ENCODE measurements at regions of chr9 and their contacts with region 1.

Region 1: GRCh38 chr9:20622330-20623020 is at the start of gene MLLT3:
- DNase-seq: peak; percentile 95 to 97 (median 96)
- H3K4me3 ChIP-seq: peak within 1 kb of the TSS; percentile 52 to 91 (median 80)
- H3K27ac ChIP-seq: peak within 1 kb of the TSS; percentile 49 to 91 (median 89)
- H3K4me1 ChIP-seq: peaks cover 14 to 30% of the 10 kb centered on the region in 2 donors
- H3K27me3 ChIP-seq: no peaks in the 10 kb centered on the region
- CTCF ChIP-seq: no peak
- POLR2A ChIP-seq: peak; percentile 51 to 91
- total RNA-seq, gene MLLT3: 14.0 to 37.7 (median 24.7) TPM

Region 2: DNA sequence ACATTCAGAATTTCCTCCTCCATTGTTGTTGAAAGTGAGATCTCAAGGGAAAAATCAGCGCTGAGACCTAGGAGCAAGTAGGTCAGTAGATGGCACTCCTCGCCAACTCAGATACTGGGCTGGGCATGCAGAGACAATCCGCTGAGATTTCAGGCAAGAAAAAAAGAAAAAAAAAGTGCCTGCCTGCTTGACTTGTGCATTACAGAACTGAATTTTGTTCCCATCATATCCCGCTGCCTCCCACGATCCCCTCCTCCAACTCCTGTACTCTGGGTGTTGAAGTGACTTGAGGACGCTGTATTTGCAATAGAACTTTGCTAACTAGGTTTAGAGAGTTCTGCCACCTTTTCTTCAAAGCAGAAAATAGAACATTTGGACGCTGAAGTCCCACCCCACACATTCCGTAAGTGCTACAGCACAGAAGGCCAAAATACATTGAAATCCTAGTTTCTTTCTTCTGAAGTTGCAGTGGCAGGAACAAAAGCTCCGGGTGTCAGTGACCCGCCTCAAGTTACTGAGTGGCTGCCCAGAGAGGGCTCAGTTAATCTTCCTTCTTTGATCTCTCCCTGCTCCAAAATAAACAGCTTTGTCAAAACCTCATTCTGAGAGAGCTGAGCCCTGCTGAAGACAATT is 266.0 kb before region 1 on chr9:
- intact Hi-C with region 1: loop called in 1 of 2 experiments (anchors 5 kb)
- DNase-seq: peak; percentile 73 to 92 (median 84)
- H3K4me3 ChIP-seq: peak overlapping the region in 1 of 4 donors; percentile 45
- H3K27ac ChIP-seq: peak overlapping the region in 4 of 5 donors; percentile 35 to 64 (median 57)
- H3K4me1 ChIP-seq: peaks cover 10 to 28% of the 10 kb centered on the region in 2 donors
- H3K27me3 ChIP-seq: no peaks in the 10 kb centered on the region
- CTCF ChIP-seq: peak; percentile 29 to 86 (median 72)
- POLR2A ChIP-seq: peak in 1 of 2 donors; percentile 6

Region 3: DNA sequence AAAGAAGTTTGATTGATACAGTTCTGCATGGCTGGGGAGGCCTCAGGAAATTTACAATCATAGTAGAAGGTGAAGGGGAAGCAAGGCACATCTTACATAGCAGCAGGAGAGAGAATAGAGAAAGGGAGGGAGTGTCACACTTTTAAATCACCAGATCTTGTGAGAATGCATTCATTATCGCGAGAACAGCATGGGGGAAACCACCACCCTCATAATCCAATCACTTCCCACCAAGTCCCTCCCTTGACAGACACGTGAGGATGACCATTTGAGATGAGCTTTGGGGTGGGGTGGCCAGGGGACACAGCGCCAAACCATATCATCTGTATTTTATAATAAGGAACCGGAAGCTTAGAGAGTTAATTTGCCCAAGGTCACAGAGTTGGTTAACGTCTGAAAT is 47.9 kb after region 1 on chr9:
- intact Hi-C with region 1: loop called in 1 of 2 experiments (anchors 10 kb)
- DNase-seq: no peak
- H3K4me3 ChIP-seq: no peak overlapping the region
- H3K27ac ChIP-seq: no peak overlapping the region
- H3K4me1 ChIP-seq: no peaks in the 10 kb centered on the region
- H3K27me3 ChIP-seq: no peaks in the 10 kb centered on the region
- CTCF ChIP-seq: no peak
- POLR2A ChIP-seq: no peak

Region 4: GRCh38 chr9:20941174-20941690 is 318.8 kb after region 1 on chr9:
- intact Hi-C with region 1: loop called in 1 of 2 experiments (anchors 10 kb)
- DNase-seq: peak; percentile 53 to 80 (median 67)
- H3K4me3 ChIP-seq: no peak overlapping the region
- H3K27ac ChIP-seq: peak overlapping the region in 1 of 5 donors; percentile 13
- H3K4me1 ChIP-seq: peaks cover 0 to 10% of the 10 kb centered on the region in 2 donors
- H3K27me3 ChIP-seq: no peaks in the 10 kb centered on the region
- CTCF ChIP-seq: peak; percentile 67 to 90 (median 84)
- POLR2A ChIP-seq: no peak

Region 5: GRCh38 chr9:21102305-21102704 is 479.8 kb after region 1 on chr9:
- intact Hi-C with region 1: loop called in 1 of 2 experiments (anchors 10 kb)
- DNase-seq: no peak
- H3K4me3 ChIP-seq: no peak overlapping the region
- H3K27ac ChIP-seq: no peak overlapping the region
- H3K4me1 ChIP-seq: no peaks in the 10 kb centered on the region
- H3K27me3 ChIP-seq: no peaks in the 10 kb centered on the region
- CTCF ChIP-seq: no peak
- POLR2A ChIP-seq: no peak